ENCODE measurements at regions of chr14 and their contacts with region 1.

Region 1: DNA sequence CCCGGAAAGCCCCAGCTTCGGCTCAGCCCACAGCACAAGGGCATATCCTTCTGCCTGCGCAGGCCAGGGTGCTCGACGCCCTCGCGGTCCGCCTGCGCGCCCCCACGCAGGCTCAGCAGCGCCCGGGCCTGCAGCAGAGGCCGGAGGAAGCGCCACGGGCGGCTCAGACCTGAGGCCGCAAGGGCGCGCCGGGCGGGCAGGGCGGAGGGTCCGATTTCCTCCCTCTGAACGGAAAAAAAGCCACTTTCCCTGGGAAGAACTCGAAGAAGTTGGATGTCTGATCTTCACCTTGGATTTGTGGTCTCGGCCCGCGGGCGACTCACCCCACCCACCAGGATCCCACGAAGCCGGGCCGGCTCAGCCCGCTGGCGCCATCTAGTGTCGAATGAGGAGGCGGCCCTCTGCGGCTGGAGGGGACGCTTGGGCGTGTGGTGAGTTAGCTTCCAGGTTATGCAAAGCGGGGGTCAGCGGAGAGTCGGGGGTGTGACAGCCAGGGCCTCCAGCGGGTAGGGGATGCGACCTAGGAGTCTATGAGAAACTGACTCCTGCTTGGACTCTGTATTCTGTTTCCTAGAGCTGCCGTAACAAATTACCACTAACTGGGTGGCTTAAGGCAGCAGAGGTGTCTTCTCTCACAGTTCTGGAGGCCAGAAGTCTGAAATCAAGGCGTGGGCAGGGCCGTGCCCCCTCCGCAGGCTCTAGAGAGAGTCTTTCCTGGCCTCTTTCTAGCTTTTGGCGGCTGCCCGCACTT is 40.0 kb upstream of the SRSF5 start:
- DNase-seq: peak; percentile 75
- H3K4me3 ChIP-seq: peak overlapping the region; percentile 2 to 40 (median 18)
- H3K27ac ChIP-seq: peak overlapping the region; percentile 20
- H3K4me1 ChIP-seq: peaks cover 5% of the 10 kb centered on the region
- H3K27me3 ChIP-seq: no peaks in the 10 kb centered on the region
- CTCF ChIP-seq: peak; percentile 98 to 99
- POLR2A ChIP-seq: no peak

Region 2: DNA sequence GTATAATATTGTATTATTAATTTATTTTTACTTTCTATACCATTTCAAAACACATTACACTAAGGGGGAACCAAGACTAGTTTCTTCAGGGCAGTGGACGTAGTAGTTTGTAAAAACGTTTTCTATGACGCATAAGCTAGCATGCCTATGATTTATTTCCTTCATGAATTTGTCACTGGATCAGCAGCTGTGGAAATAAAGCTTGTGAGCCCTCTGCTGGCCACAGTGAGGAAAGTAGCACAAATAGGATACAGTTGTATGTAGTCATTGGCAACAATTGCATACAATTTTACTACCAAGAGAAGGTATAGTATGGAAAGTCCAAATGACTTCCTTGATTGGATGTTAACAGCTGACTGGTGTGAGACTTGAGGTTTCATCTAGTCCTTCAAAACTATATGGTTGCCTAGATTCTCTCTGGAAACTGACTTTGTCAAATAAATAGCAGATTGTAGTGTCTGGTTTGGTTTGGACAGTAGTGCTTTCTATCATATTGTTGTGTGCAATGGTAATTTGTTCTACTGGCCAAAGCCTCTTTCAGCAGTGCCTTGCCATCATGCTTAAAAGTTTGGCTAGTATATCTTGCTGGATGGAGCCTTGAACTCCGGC is 266.7 kb before region 1 on chr14:
- CTCF ChIA-PET with region 1: no interaction called
- POLR2A ChIA-PET with region 1: no interaction called
- dilution Hi-C with region 1: no loop called
- intact Hi-C with region 1: no loop called
- DNase-seq: peak; percentile 90
- H3K4me3 ChIP-seq: no peak overlapping the region
- H3K27ac ChIP-seq: peak overlapping the region; percentile 28
- H3K4me1 ChIP-seq: peaks cover 16% of the 10 kb centered on the region
- H3K27me3 ChIP-seq: no peaks in the 10 kb centered on the region
- CTCF ChIP-seq: peak; percentile 60 to 74
- POLR2A ChIP-seq: no peak

Region 3: GRCh38 chr14:69535230-69535848 is 191.6 kb before region 1 on chr14:
- CTCF ChIA-PET with region 1: interaction called, 6 read pairs
- POLR2A ChIA-PET with region 1: no interaction called
- dilution Hi-C with region 1: no loop called
- intact Hi-C with region 1: loop called (anchors 2 kb)
- DNase-seq: peak; percentile 34
- H3K4me3 ChIP-seq: no peak overlapping the region
- H3K27ac ChIP-seq: no peak overlapping the region
- H3K4me1 ChIP-seq: no peaks in the 10 kb centered on the region
- H3K27me3 ChIP-seq: peaks cover 18 to 26% of the 10 kb centered on the region in 2 experiments
- CTCF ChIP-seq: peak; percentile 61 to 83
- POLR2A ChIP-seq: no peak

Region 4: DNA sequence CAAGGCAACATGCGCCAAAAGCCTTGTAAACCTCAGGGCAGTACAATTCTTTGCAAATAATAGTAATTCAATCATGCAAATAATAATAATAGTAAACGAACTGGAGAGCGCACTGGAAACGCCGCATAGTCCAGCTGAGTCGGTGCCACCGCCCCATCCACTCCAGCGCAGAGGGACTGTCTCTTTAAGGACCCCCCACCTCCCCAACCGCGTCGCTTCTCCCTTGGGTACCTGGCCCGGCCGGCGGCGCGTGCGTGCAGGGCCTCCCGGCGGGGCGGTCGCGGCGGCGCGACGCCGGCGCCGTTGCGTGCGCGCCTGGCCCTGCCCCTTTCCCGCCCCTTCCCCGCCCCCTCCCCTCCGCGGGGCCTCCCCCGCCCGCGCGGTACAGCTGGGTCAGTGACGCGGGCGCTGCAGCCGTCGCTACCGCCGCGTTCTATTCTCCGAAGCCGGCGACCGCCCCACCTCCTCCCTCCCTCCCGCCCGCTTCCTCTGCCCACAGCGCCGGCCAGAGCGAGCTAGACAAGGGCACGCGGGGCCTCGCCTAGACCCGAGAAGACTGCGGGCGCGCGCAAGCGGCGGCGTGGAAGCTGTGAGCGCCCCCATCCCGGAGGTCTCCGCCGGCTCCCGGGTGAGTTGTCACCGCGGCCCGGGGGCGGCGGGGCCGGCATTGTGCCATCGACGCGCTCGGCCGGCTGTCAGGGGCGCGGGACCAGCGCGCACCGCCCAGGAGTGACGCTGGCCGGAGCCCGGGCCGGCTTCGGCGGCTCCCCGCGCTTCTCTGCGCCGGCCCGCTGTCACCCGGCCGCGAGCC is 115.5 kb before region 1 on chr14 and contains the start of gene SUSD6:
- CTCF ChIA-PET with region 1: interaction called, 44 read pairs
- POLR2A ChIA-PET with region 1: interaction called, 4 read pairs
- dilution Hi-C with region 1: no loop called
- intact Hi-C with region 1: loop called (anchors 2 kb)
- DNase-seq: peak; percentile 85
- H3K4me3 ChIP-seq: peak within 1 kb of the TSS; percentile 94 to 97 (median 96)
- H3K27ac ChIP-seq: peak within 1 kb of the TSS; percentile 89
- H3K4me1 ChIP-seq: peaks cover 34% of the 10 kb centered on the region
- H3K27me3 ChIP-seq: no peaks in the 10 kb centered on the region
- CTCF ChIP-seq: no peak
- POLR2A ChIP-seq: peak; percentile 14
- total RNA-seq, gene SUSD6: 19.5 and 29.0 TPM in 2 replicates

Region 5: GRCh38 chr14:69660344-69661193 is 66.4 kb before region 1 on chr14:
- CTCF ChIA-PET with region 1: no interaction called
- POLR2A ChIA-PET with region 1: no interaction called
- dilution Hi-C with region 1: no loop called
- intact Hi-C with region 1: no loop called
- DNase-seq: peak; percentile 22
- H3K4me3 ChIP-seq: no peak overlapping the region
- H3K27ac ChIP-seq: no peak overlapping the region
- H3K4me1 ChIP-seq: peaks cover 7% of the 10 kb centered on the region
- H3K27me3 ChIP-seq: no peaks in the 10 kb centered on the region
- CTCF ChIP-seq: no peak
- POLR2A ChIP-seq: no peak

Region 6: DNA sequence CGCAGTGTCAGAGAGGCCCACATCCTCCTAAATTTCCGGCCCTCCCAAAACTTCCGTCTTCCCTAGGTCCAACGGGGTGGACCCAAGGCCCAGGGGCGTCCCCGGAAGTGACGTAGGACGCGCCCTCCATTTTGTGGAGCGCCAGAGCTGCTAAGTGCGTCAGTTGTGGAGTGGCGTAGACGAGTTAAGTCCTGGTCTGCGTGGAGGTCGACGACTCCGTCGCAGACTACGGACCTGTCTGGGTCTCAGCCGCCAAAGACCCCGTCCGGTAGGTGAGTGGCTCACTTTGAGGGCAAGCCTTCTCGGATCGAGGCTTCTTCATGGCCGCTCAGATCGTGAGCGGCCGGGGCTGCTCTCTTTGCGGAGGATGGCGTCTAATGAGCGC is 40.0 kb after region 1 on chr14 and contains the start of gene SRSF5:
- CTCF ChIA-PET with region 1: interaction called, 23 read pairs
- POLR2A ChIA-PET with region 1: interaction called, 10 read pairs
- dilution Hi-C with region 1: no loop called
- intact Hi-C with region 1: loop called (anchors 1 kb)
- DNase-seq: peak; percentile 97
- H3K4me3 ChIP-seq: peak within 1 kb of the TSS; percentile 24 to 98 (median 76)
- H3K27ac ChIP-seq: peak within 1 kb of the TSS; percentile 88
- H3K4me1 ChIP-seq: peaks cover 27% of the 10 kb centered on the region
- H3K27me3 ChIP-seq: no peaks in the 10 kb centered on the region
- CTCF ChIP-seq: no peak
- POLR2A ChIP-seq: peak; percentile 99
- total RNA-seq, gene SRSF5: 253 and 276 TPM in 2 replicates

Region 7: GRCh38 chr14:69879175-69880043 is 152.5 kb after region 1 on chr14 and contains the start of gene SMOC1:
- CTCF ChIA-PET with region 1: interaction called, 4 read pairs
- POLR2A ChIA-PET with region 1: no interaction called
- dilution Hi-C with region 1: no loop called
- intact Hi-C with region 1: loop called (anchors 5 kb)
- DNase-seq: peak; percentile 57
- H3K4me3 ChIP-seq: peak within 1 kb of the TSS in 1 of 3 experiments; percentile 12
- H3K27ac ChIP-seq: no peak within 1 kb of the TSS
- H3K4me1 ChIP-seq: no peaks in the 10 kb centered on the region
- H3K27me3 ChIP-seq: peaks cover 34% of the 10 kb centered on the region in 2 experiments
- CTCF ChIP-seq: no peak
- POLR2A ChIP-seq: no peak
- total RNA-seq, gene SMOC1: 0.78 and 0.97 TPM in 2 replicates

Region 8: DNA sequence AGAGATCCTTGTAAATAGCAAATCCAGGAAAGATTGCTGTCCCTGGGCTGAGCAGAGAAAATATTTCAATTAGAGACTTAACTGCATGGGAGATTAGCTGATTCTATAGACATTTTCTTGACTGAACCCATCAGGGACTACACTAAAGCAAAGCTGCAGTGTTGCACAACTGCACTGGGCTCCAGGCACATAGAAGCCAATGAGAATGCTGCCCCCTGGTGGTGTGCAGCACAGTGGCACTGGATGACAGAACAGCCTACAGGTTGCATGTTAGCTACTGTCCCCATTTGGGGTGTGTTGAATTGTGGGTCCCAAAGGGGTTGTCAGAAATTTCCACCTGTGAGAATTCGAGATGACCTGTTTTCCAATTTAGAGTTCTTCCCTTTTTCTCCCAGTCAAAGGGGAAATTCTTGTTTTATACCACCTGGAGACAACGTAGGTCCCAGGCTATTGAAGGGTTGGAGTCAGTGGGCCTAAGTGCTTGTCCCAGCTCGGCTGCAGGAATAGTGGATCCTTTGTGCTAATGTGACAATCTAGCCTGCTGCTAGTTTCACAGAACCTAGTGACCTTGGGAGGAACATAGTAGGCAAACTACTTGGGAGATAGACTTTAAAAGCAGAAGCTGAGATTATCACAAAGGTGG is 347.1 kb after region 1 on chr14:
- CTCF ChIA-PET with region 1: interaction called, 24 read pairs
- POLR2A ChIA-PET with region 1: no interaction called
- dilution Hi-C with region 1: no loop called
- intact Hi-C with region 1: no loop called
- DNase-seq: peak; percentile 35
- H3K4me3 ChIP-seq: no peak overlapping the region
- H3K27ac ChIP-seq: no peak overlapping the region
- H3K4me1 ChIP-seq: no peaks in the 10 kb centered on the region
- H3K27me3 ChIP-seq: no peaks in the 10 kb centered on the region
- CTCF ChIP-seq: peak; percentile 71 to 83
- POLR2A ChIP-seq: no peak

Measured in endothelial cell of umbilical vein (primary cell).